Psoas muscle (tissue), 8 donors: ENCODE measurements at regions of chr6 and their contacts with region 1.

Region 1: GRCh38 chr6:134436281-134436815 is 118.4 kb upstream of the SGK1 start:
- DNase-seq: peak in 1 of 2 donors; percentile 50
- ATAC-seq: peak; percentile 92 to 97 (median 96)
- H3K4me3 ChIP-seq: no peak overlapping the region
- H3K27ac ChIP-seq: peak overlapping the region; percentile 71
- H3K4me1 ChIP-seq: peaks cover 15% of the 10 kb centered on the region
- H3K27me3 ChIP-seq: no peaks in the 10 kb centered on the region
- CTCF ChIP-seq: no peak

Region 2: DNA sequence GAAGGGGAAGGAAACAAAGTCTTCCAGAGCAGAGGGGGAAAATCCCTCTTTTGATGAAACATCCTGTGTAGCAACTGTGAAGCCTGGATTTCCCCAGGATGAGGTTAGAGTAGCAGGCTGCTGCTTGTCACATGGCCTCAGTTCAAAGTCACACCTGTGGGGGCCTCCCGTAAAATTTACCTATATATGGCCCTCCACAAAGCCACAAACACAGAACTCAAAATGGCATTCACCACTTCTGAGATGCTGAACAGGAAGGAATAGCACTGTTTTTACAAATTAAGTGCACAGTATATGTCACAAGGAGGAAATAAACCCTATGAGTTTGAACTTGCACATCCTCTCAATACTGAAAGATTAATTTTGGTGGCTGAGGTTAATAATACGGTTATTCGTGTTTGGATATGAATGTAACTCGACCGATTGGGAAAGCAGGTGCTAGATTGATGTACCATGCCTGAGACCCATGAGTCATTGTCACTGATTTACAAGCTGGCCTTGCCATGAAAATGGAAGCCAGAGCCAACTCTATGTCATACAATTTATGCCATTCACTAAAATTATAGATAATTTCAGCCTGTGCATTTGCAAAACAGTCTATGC is 189.0 kb before region 1 on chr6:
- intact Hi-C with region 1: loop called in 1 of 2 experiments (anchors 5 kb)
- DNase-seq: no peak
- ATAC-seq: peak; percentile 91 to 96 (median 93)
- H3K4me3 ChIP-seq: no peak overlapping the region
- H3K27ac ChIP-seq: peak overlapping the region; percentile 83
- H3K4me1 ChIP-seq: peaks cover 31% of the 10 kb centered on the region
- H3K27me3 ChIP-seq: no peaks in the 10 kb centered on the region
- CTCF ChIP-seq: no peak

Region 3: GRCh38 chr6:134379086-134379485 is 57.3 kb before region 1 on chr6:
- intact Hi-C with region 1: no loop called
- DNase-seq: no peak
- ATAC-seq: no peak
- H3K4me3 ChIP-seq: no peak overlapping the region
- H3K27ac ChIP-seq: no peak overlapping the region
- H3K4me1 ChIP-seq: no peaks in the 10 kb centered on the region
- H3K27me3 ChIP-seq: no peaks in the 10 kb centered on the region
- CTCF ChIP-seq: no peak

Region 4: GRCh38 chr6:134477991-134478635 is 41.8 kb after region 1 on chr6:
- intact Hi-C with region 1: no loop called
- DNase-seq: no peak
- ATAC-seq: no peak
- H3K4me3 ChIP-seq: no peak overlapping the region
- H3K27ac ChIP-seq: no peak overlapping the region
- H3K4me1 ChIP-seq: peaks cover 24% of the 10 kb centered on the region
- H3K27me3 ChIP-seq: no peaks in the 10 kb centered on the region
- CTCF ChIP-seq: no peak

Region 5: DNA sequence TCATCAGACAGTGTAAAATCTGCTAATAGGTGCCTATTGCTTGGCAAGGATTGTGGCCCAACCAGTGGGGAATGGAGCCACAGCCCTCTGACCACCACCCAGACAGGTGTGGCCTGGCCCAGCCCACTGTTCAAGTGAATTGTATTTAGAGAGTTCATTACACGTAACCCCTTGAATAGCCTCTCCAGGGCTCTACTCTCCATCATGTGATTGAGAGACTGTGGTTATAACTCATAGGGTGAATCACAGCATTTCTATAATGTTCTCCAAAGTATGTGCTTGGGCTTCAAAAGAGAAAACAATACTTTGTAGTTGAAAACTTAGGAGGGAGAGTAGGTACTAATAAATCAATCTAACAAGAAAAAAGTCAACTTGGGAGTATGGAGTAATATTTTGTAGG is 475.2 kb after region 1 on chr6:
- intact Hi-C with region 1: no loop called
- DNase-seq: no peak
- ATAC-seq: no peak
- H3K4me3 ChIP-seq: no peak overlapping the region
- H3K27ac ChIP-seq: no peak overlapping the region
- H3K4me1 ChIP-seq: peaks cover 8% of the 10 kb centered on the region
- H3K27me3 ChIP-seq: no peaks in the 10 kb centered on the region
- CTCF ChIP-seq: no peak